ENCODE measurements at regions of chr12 and their contacts with region 1.

Region 1: GRCh38 chr12:119913536-119914330 is 36.6 kb upstream of the CIT start:
- DNase-seq: no peak
- ATAC-seq: no peak
- H3K4me3 ChIP-seq: no peak overlapping the region
- H3K27ac ChIP-seq: no peak overlapping the region
- H3K4me1 ChIP-seq: no peaks in the 10 kb centered on the region
- H3K27me3 ChIP-seq: no peaks in the 10 kb centered on the region
- CTCF ChIP-seq: no peak

Region 2: DNA sequence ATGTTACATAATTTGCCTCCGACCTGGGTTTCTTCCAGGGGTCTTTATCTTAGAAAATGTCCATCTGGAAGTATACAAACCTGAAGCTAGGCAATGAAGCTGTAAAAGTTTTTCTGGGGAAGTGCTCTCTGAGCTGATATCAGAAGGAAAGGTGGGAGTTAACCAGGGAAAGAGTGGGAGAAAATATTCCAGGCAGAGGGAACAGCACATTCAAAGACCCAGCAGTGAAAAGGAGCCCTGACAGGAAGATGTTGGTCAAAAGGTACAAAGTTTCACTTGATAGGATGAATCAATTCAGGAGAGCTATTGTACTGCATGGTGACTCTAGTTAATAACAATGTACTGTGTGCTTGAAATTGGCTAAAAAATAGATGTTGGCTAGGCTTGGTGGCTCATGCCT is 18.8 kb before region 1 on chr12:
- CTCF ChIA-PET with region 1: no interaction called
- POLR2A ChIA-PET with region 1: no interaction called
- in situ Hi-C with region 1: no loop called
- intact Hi-C with region 1: loop called (anchors 1 kb)
- DNase-seq: no peak
- ATAC-seq: no peak
- H3K4me3 ChIP-seq: no peak overlapping the region
- H3K27ac ChIP-seq: no peak overlapping the region
- H3K4me1 ChIP-seq: no peaks in the 10 kb centered on the region
- H3K27me3 ChIP-seq: no peaks in the 10 kb centered on the region
- CTCF ChIP-seq: no peak

Region 3: GRCh38 chr12:120194534-120195395 is 281.0 kb after region 1 on chr12 and contains the start of gene GCN1:
- CTCF ChIA-PET with region 1: no interaction called
- POLR2A ChIA-PET with region 1: no interaction called
- in situ Hi-C with region 1: no loop called
- intact Hi-C with region 1: no loop called
- DNase-seq: peak; percentile 62
- ATAC-seq: peak; percentile 85
- H3K4me3 ChIP-seq: peak within 1 kb of the TSS; percentile 88 to 95
- H3K27ac ChIP-seq: peak within 1 kb of the TSS; percentile 98
- H3K4me1 ChIP-seq: peaks cover 31% of the 10 kb centered on the region
- H3K27me3 ChIP-seq: no peaks in the 10 kb centered on the region
- CTCF ChIP-seq: no peak
- total RNA-seq, gene GCN1: 175 TPM